ENCODE measurements at regions of chr7 and their contacts with region 1.

Region 1: DNA sequence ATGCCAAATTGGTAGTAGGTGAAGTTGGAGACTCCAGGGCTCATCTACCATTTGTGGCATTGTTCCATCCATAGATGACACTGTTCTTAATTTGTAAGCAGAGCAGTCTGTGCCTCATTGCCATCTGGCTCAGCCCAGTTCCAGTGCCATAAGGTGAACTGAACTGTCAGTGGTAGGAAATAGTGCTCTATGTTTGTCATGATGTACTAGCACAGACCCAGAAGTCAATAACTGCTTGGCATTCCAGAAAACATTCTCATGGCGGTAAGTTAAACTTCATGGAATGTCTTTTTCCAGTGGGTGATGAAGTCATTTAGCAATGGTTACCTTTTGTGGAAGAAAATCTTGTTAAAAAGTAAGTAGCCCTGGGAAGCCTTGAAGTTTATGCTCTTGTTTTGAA is 302.7 kb downstream of the SUGCT start:
- DNase-seq: peak in 1 of 2 donors; percentile 83
- H3K4me3 ChIP-seq: no peak overlapping the region
- H3K27ac ChIP-seq: peak overlapping the region; percentile 81 to 88
- H3K4me1 ChIP-seq: peaks cover 0 to 20% of the 10 kb centered on the region in 2 donors
- H3K27me3 ChIP-seq: no peaks in the 10 kb centered on the region
- CTCF ChIP-seq: no peak

Region 2: GRCh38 chr7:40507166-40507565 is 69.7 kb after region 1 on chr7:
- intact Hi-C with region 1: loop called (anchors 2 kb)
- DNase-seq: no peak
- H3K4me3 ChIP-seq: no peak overlapping the region
- H3K27ac ChIP-seq: no peak overlapping the region
- H3K4me1 ChIP-seq: peaks cover 0 to 3% of the 10 kb centered on the region in 2 donors
- H3K27me3 ChIP-seq: no peaks in the 10 kb centered on the region
- CTCF ChIP-seq: no peak

Measured in ascending aorta (tissue), 2 donors.